ENCODE measurements at regions of chr1 and their contacts with region 1.

Region 1: GRCh38 chr1:203216274-203217138 is 13.0 kb downstream of the CHIT1 start:
- DNase-seq: peak in 7 of 10 donors; percentile 34 to 84 (median 62)
- H3K4me3 ChIP-seq: no peak overlapping the region
- H3K27ac ChIP-seq: peak overlapping the region in 6 of 59 donors; percentile 1 to 36 (median 15)
- H3K27me3 ChIP-seq: no peaks in the 10 kb centered on the region
- CTCF ChIP-seq: peak in 55 of 56 donors; percentile 71 to 96 (median 86)

Region 2: DNA sequence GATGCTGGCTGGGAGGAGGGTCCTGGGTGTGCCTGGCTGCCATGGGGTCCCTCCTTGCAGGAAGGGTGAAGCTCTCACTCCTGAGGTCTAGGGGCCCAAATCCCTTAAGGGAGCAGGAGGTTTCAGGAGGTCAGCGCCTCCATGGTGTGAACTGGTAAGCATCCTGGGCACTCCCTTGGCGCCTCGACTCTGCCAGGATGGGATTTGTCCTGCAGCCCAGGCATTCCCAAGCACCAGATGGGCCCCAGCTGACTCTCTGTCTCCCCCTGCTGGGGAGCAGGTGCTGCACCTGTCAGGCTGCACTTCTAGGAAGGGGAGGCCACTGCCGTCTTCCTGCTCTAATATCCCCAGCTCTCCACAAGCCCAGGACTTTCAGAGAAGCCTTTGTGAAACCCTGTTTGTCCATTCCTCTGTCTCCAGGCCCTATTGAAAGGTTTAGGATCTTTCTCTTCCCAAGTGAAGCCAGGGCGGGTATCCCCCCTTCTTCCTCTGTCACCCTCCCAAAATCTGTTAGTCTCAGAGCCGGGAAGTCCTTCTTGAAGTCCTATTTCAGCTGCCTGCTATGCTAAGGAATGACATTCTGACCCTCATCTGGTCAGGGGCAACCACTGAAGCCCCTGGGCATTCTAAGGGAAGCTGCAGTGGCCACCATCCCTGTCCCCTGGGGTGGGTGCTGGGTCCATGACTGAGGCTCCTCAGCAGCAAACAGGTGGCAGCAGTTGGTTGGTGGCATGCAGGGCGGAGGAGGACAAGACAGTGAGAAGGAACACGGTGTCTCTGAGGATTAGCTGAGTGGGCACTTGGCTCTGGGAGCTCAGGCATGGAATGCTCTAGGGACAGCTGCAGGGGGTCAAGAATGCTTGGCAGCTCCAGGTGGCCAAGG is 44.1 kb before region 1 on chr1:
- intact Hi-C with region 1: loop called in 1 of 2 experiments (anchors 5 kb)
- DNase-seq: peak; percentile 56 to 79 (median 72)
- H3K4me3 ChIP-seq: no peak overlapping the region
- H3K27ac ChIP-seq: peak overlapping the region in 53 of 59 donors; percentile 7 to 71 (median 51)
- H3K27me3 ChIP-seq: no peaks in the 10 kb centered on the region
- CTCF ChIP-seq: peak; percentile 64 to 93 (median 87)

Region 3: GRCh38 chr1:203181586-203182386 is 34.7 kb before region 1 on chr1:
- intact Hi-C with region 1: loop called in 1 of 2 experiments (anchors 2 kb)
- DNase-seq: peak in 3 of 10 donors; percentile 21 to 30 (median 21)
- H3K4me3 ChIP-seq: no peak overlapping the region
- H3K27ac ChIP-seq: no peak overlapping the region
- H3K27me3 ChIP-seq: no peaks in the 10 kb centered on the region
- CTCF ChIP-seq: no peak

Measured in dorsolateral prefrontal cortex (tissue), 120 donors.